Tibial artery (tissue), 4 donors: ENCODE measurements at regions of chr13 and their contacts with region 1.

Region 1: DNA sequence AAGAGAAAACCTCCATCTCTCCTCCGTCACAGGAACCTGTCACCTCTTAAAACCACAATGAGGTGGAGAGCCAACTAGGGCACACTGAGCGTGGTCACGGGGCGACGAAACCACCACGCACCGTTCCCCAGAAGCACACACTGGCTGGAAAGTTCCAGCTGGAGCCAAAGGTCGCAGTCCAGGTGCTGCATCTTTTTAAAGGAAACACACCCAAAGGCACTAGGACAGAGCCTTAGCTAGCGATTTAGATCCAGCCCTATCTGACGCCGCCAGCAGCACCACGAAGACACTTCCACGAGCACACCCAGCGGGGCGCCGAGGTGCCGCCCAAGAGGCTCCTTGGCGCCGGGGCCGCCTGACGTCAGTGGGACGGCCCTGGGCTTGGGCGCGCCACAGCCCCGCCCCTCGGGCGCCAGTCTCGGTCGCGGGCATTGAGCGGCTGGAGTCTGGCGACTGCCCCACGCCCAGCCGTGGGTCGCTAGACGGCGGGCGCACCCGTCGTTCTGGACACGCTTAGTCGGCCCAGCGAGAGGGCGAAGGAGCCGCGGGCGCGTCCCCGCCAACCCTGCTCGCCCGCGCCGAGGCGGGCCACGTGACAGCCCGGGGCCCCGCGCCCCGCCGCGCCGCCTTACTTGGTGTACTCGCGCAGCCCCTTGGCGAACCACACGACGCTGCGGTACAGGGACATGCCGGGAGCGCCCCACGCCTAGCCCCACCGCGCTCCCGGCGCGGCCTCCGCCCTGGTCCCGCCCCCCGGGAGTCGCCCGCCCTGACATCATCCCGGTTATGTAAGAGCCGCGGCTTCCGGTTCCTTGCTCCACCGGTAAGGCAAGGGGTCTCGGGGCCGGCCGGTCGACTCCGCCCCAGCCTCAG is at the start of gene DHRS12:
- DNase-seq: peak; percentile 93 to 96
- H3K4me3 ChIP-seq: peak within 1 kb of the TSS; percentile 73 to 74
- H3K27ac ChIP-seq: peak within 1 kb of the TSS; percentile 95 to 99
- H3K4me1 ChIP-seq: peaks cover 0 to 61% (median 50%) of the 10 kb centered on the region in 4 donors
- H3K27me3 ChIP-seq: no peaks in the 10 kb centered on the region
- CTCF ChIP-seq: no peak

Region 2: DNA sequence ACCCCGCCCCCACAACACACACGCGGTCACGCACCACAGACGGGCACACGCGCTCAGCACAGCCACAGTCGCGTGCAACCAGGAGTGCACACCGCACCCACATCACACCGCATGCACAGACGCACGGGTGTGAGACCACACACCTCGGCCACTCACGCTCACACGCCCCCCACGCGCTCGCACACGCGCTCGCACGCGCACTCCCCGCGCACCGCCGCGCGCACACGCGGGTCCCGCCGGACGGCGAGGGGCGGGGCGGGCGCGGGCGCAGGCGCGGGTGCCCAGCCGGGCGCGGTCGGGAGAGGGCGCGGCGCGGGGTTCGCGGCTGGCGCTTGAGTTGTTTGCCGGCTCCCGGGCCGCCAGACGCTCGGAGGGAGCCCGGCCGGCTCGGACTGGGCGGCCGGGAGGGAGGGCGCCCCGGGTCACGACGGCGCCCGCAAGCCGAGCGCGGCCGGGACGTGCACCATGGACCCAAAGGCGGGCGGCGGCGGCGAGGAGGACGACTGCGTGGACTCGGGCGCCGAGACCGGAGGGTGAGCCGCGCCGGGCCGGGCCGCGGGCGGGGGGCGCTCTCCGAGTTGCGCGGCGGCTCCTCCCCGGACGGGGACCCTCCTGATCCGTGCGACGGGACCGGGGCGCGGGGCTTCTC is 581.5 kb before region 1 on chr13 and contains the start of gene FAM124A:
- intact Hi-C with region 1: loop called (anchors 10 kb)
- DNase-seq: no peak
- H3K4me3 ChIP-seq: peak within 1 kb of the TSS; percentile 90 to 93
- H3K27ac ChIP-seq: peak within 1 kb of the TSS; percentile 51 to 63
- H3K4me1 ChIP-seq: peaks cover 0 to 19% (median 7%) of the 10 kb centered on the region in 4 donors
- H3K27me3 ChIP-seq: no peaks in the 10 kb centered on the region
- CTCF ChIP-seq: peak in 1 of 2 experiments; percentile 63

Region 3: GRCh38 chr13:51452361-51453206 is 351.1 kb before region 1 on chr13 and contains the start of gene INTS6:
- intact Hi-C with region 1: loop called (anchors 2 kb)
- DNase-seq: peak; percentile 100
- H3K4me3 ChIP-seq: peak within 1 kb of the TSS; percentile 85 to 97
- H3K27ac ChIP-seq: peak within 1 kb of the TSS; percentile 98 to 100
- H3K4me1 ChIP-seq: peaks cover 0 to 32% (median 11%) of the 10 kb centered on the region in 4 donors
- H3K27me3 ChIP-seq: no peaks in the 10 kb centered on the region
- CTCF ChIP-seq: no peak

Region 4: DNA sequence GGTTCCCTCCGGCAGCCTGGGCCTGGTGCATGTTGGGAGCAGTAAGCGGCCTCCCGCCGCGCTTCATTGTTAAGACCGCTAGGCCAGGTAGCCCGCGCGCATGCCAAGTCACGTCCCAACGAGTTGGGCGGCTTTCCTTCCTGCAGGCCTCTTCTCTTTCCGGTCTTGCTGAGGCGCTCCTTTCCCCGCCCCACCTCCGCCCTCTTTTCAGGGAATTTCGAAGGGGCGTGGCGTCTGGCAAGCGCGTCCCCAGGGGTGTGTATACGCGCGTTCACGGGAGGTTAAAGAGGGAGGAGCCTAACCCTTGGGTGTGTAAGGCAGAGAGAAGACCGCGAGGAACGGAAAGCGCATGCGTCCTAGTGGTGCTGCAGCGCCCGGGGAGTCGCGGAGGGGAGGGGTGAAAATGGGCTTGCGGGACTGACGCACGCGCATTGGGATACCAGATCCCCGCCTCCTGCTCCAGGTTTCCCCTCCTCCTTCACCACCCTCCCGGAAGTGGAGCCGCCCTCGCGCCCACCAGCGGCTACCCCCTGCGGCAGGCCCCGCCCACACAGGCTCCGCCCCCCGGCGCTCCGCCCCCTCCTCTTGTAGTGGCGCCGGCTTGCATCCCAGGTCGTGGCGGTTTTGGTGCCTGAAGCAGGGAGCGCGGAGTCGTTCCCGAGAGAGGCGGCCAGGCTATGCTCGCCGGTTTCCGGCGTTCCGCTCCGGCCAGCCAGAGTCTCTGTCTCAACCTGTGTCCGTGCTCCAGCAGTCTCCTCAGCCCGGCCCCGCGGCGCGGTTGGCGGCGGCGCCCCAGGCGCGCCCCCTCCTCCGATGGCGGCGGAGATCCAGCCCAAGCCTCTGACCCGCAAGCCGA is 219.6 kb before region 1 on chr13 and contains the start of gene WDFY2:
- intact Hi-C with region 1: loop called (anchors 10 kb)
- DNase-seq: peak; percentile 100
- H3K4me3 ChIP-seq: peak within 1 kb of the TSS; percentile 75 to 97
- H3K27ac ChIP-seq: peak within 1 kb of the TSS; percentile 77 to 88
- H3K4me1 ChIP-seq: peaks cover 0 to 35% (median 20%) of the 10 kb centered on the region in 4 donors
- H3K27me3 ChIP-seq: no peaks in the 10 kb centered on the region
- CTCF ChIP-seq: peak in 1 of 2 experiments; percentile 44

Region 5: GRCh38 chr13:52011632-52012511 is 208.2 kb after region 1 on chr13 and contains the start of gene ALG11:
- intact Hi-C with region 1: loop called (anchors 10 kb)
- DNase-seq: peak; percentile 100
- H3K4me3 ChIP-seq: peak within 1 kb of the TSS; percentile 89 to 94
- H3K27ac ChIP-seq: peak within 1 kb of the TSS; percentile 75 to 83
- H3K4me1 ChIP-seq: peaks cover 0 to 23% (median 7%) of the 10 kb centered on the region in 4 donors
- H3K27me3 ChIP-seq: no peaks in the 10 kb centered on the region
- CTCF ChIP-seq: peak in 1 of 2 experiments; percentile 11

Region 6: GRCh38 chr13:52450012-52450792 is 646.5 kb after region 1 on chr13 and contains the start of gene VPS36:
- intact Hi-C with region 1: loop called (anchors 10 kb)
- DNase-seq: peak; percentile 92 to 97
- H3K4me3 ChIP-seq: peak within 1 kb of the TSS; percentile 69 to 70
- H3K27ac ChIP-seq: peak within 1 kb of the TSS; percentile 82 to 88
- H3K4me1 ChIP-seq: peaks cover 0 to 34% (median 19%) of the 10 kb centered on the region in 4 donors
- H3K27me3 ChIP-seq: no peaks in the 10 kb centered on the region
- CTCF ChIP-seq: peak; percentile 99 to 100

Region 7: DNA sequence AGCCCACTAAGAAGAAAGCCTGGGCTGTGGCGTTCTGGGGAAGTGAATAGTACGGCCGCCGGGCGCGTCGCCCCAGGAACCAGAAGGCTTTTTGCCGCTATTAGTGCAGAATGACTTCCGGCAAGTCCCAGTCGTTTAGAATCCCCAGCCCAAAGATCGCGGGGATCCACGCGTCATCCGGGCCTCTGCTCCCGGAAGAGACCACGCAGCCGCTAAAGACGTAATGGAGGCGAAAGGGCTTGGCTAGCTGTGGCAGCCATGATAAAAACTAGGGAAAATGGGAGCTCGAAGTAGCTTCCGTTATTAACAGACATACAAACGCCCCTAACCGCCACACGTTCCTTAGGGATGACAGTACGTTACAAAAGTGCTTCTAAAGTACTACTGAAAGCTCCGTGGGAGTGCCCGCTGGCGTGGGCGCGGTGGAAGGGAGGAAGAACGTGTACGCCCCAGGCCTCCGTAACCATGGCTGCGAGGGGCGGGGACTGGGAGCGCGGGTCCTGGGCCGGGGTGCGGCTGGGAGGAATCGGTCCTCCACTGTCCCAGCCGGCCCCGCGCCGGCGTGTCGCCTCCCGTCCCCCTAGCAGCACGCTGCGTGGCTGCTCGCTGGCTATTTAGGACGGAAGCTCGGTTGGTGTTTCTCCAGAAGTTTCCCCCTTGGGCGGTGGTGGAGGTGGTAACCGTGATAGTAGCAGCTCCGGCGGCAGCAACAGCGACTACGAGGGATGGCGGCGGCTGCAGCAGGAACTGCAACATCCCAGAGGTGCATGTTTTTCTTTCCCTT is 848.7 kb after region 1 on chr13 and contains the start of gene SUGT1:
- intact Hi-C with region 1: loop called (anchors 10 kb)
- DNase-seq: peak; percentile 97 to 98
- H3K4me3 ChIP-seq: peak within 1 kb of the TSS; percentile 79 to 83
- H3K27ac ChIP-seq: peak within 1 kb of the TSS; percentile 94 to 96
- H3K4me1 ChIP-seq: peaks cover 0 to 51% (median 33%) of the 10 kb centered on the region in 4 donors
- H3K27me3 ChIP-seq: no peaks in the 10 kb centered on the region
- CTCF ChIP-seq: peak; percentile 65 to 73